ENCODE measurements at regions of chr2 and their contacts with region 1.

Region 1: DNA sequence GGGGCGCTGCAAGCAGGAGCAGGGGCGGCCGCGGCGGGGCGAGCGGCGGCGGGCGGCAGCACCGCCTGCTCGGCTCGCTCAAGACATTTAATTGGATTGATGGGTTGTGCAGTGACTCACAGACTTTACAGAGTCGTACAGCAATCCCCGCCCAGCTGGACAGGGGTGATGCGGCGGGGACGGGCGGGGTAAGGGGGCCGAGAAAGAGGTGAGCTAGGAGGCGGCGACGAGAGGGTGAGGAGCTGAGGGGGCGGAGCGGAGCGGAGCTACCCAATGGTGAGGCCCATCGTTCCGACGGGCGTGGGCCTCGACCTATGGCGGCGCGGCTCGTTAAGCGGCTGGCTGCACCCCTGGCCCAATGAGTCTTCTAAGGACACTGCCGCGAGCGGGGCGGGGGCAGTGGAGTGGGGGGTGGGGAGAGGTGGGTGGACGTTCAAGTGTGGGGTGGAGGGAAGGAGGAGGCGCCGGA is 97.1 kb upstream of the SERTAD2 start:
- DNase-seq: peak; percentile 100
- H3K4me3 ChIP-seq: peak overlapping the region; percentile 66 to 79
- H3K27ac ChIP-seq: peak overlapping the region; percentile 96
- H3K4me1 ChIP-seq: peaks cover 34% of the 10 kb centered on the region
- H3K27me3 ChIP-seq: no peaks in the 10 kb centered on the region
- CTCF ChIP-seq: no peak
- POLR2A ChIP-seq: peak; percentile 83 to 98

Region 2: GRCh38 chr2:64653349-64654062 is 97.3 kb before region 1 on chr2 and contains the start of gene SERTAD2:
- intact Hi-C with region 1: loop called (anchors 5 kb)
- DNase-seq: no peak
- H3K4me3 ChIP-seq: peak within 1 kb of the TSS; percentile 74 to 92
- H3K27ac ChIP-seq: peak within 1 kb of the TSS; percentile 100
- H3K4me1 ChIP-seq: peaks cover 57% of the 10 kb centered on the region
- H3K27me3 ChIP-seq: no peaks in the 10 kb centered on the region
- CTCF ChIP-seq: no peak
- POLR2A ChIP-seq: peak in 1 of 2 donors; percentile 70
- total RNA-seq, gene SERTAD2: 19.2 TPM

Region 3: DNA sequence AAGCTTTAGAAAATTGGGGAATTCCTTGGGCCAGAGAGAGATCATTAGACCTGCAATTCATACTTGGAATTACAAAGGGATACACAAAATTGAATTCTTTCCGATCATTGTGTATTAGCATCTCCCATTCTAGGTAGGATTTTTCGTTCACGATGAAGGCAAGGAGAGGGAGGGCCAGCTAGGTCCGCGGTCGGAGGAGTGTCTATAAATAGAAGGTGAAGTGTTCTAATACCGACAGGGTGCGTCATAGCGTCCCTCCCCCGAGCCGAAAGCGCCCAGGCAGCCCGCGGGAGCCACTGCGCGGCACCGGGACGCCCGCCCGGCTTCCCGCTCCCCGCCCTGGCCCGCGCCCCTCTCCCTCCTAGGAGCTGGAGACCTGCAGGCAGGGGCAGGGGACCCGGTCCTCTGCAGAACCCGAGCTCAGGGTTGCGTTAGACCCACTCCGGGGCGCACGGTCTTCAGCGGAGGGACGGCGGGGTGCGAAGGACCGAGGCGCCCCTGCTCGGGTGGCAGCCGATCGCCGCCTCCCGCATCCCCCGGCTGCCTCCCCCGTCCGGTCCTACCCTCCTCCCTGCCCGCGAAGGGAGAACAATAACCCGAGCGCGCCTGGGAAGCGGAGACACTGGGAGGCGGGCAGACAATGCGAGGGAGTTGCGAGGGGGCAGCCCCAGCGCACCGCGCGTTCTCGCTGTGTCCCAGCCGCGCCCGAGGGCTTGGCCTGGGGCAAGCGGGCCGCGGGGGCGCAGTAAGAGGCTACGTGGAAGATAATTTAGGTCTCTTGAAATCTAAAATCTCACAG is 17.0 kb after region 1 on chr2:
- intact Hi-C with region 1: loop called (anchors 2 kb)
- DNase-seq: no peak
- H3K4me3 ChIP-seq: peak overlapping the region; percentile 70 to 83
- H3K27ac ChIP-seq: peak overlapping the region; percentile 97
- H3K4me1 ChIP-seq: peaks cover 30% of the 10 kb centered on the region
- H3K27me3 ChIP-seq: no peaks in the 10 kb centered on the region
- CTCF ChIP-seq: no peak
- POLR2A ChIP-seq: peak in 1 of 2 donors; percentile 90

Region 4: GRCh38 chr2:64859312-64860212 is 108.7 kb after region 1 on chr2:
- intact Hi-C with region 1: loop called (anchors 5 kb)
- DNase-seq: peak in 1 of 2 donors; percentile 96
- H3K4me3 ChIP-seq: peak overlapping the region; percentile 45 to 52
- H3K27ac ChIP-seq: peak overlapping the region; percentile 92
- H3K4me1 ChIP-seq: peaks cover 45% of the 10 kb centered on the region
- H3K27me3 ChIP-seq: no peaks in the 10 kb centered on the region
- CTCF ChIP-seq: no peak
- POLR2A ChIP-seq: peak in 1 of 2 donors; percentile 12

Measured in vagina (tissue), 2 donors.